ENCODE measurements at regions of chr4 and their contacts with region 1.

Region 1: DNA sequence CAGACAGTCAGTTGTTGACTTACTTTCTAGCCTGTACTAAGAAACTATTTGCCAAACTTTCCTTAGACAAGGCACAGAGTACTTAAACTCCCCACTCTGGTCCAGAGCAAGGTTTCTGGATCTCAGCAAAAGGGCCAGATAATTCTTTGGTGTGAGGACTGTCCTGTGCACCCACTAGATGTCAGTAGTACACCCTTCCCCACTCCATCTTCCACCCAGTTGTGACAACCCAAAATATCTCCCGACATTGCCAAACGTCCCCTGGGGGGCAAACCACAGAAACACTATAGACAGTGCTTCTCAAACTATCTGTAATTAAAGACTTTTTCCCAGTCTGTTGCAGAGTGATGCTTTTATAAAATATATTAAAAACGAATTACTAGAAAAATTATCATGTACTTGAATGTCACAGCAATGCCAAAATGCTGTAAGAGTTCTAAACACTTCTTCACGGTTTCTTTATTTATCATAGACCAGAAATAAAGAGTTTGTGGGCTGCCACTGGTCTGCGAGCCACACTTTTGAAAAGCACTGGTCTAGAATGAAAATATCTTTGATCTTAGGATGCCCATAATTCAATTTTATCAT is 203.5 kb downstream of the PRDM5 start:
- DNase-seq: peak; percentile 49
- ATAC-seq: peak; percentile 93
- H3K4me3 ChIP-seq: no peak overlapping the region
- H3K27ac ChIP-seq: no peak overlapping the region
- H3K4me1 ChIP-seq: 0 out of 2 replicates have a peak, but pooled peaks cover 2% of the 10 kb centered on the region
- H3K27me3 ChIP-seq: no peaks in the 10 kb centered on the region
- CTCF ChIP-seq: peak; percentile 73
- POLR2A ChIP-seq: no peak
- RAD21 ChIP-seq: peak; percentile 87

Region 2: DNA sequence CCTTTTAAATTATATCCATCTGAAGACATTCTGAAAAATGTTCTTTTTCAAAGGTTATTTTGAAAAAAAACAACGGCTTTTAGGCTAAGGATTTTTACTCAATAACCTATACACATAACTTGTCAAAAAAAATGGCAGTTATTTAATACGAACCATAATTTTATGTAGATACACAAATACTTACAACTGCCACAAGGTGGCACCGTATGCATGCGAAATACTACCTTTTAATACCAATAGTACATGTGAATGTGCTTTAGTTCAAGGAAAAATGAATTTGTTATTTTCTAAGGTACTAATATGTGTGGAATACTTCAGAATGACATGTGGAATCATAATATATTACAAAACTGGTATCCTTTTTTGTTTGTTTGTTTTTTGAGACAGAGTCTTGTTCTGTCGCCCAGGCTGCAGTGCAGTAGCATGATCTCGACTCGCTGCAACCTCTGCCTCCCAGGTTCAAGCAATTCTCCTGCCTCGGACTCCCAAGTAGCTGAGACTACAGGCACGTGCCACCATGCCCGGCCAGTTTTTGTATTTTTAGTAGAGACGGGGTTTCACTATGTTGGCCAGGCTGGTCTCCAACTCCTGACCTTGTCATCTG is 647.8 kb before region 1 on chr4:
- CTCF ChIA-PET with region 1: no interaction called
- POLR2A ChIA-PET with region 1: no interaction called
- dilution Hi-C with region 1: no loop called
- in situ Hi-C with region 1: no loop called
- intact Hi-C with region 1: loop called (anchors 5 kb)
- DNase-seq: peak; percentile 80
- ATAC-seq: no peak; the same call in 1 of the 2 replicates
- H3K4me3 ChIP-seq: no peak overlapping the region
- H3K27ac ChIP-seq: no peak overlapping the region
- H3K4me1 ChIP-seq: peaks cover 7% of the 10 kb centered on the region
- H3K27me3 ChIP-seq: no peaks in the 10 kb centered on the region
- CTCF ChIP-seq: peak; percentile 75
- POLR2A ChIP-seq: no peak
- RAD21 ChIP-seq: peak; percentile 75

Region 3: DNA sequence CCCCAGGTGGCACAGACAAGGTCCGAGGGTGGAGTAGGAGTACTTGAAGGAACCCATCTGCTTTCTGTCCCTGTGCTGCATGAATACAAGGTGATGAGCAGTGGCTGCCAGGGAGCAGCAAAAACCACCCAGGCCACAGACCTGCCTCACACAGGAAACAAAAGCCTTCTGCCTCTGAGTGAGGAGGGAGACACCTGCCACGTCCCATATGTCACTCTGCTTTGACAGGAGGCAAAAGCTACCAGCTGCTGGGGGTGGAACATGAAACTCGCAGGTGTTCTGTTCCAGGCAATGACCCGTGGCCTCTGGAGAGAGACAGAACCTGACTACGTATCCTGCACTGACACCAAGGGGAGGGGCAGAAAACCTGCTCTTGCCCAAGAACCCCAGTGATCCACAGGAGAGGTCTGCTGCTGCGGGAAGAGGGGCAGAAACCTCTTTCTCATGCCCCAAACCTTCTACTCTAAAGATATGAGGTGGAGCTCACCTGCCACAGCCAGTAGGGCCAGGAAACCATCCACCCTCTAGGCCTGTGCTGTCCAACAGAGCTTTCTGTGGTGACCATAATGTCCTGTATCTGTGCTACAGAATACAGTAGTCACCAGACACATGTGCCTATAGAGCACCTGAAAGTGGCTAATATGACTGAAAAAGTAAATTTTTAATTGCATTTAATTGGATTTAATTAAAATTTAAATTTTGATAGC is 30.5 kb after region 1 on chr4:
- CTCF ChIA-PET with region 1: no interaction called
- POLR2A ChIA-PET with region 1: no interaction called
- dilution Hi-C with region 1: no loop called
- in situ Hi-C with region 1: no loop called
- intact Hi-C with region 1: no loop called
- DNase-seq: no peak
- ATAC-seq: no peak
- H3K4me3 ChIP-seq: no peak overlapping the region
- H3K27ac ChIP-seq: no peak overlapping the region
- H3K4me1 ChIP-seq: no peaks in the 10 kb centered on the region
- H3K27me3 ChIP-seq: no peaks in the 10 kb centered on the region
- CTCF ChIP-seq: no peak
- POLR2A ChIP-seq: no peak
- RAD21 ChIP-seq: no peak

Region 4: DNA sequence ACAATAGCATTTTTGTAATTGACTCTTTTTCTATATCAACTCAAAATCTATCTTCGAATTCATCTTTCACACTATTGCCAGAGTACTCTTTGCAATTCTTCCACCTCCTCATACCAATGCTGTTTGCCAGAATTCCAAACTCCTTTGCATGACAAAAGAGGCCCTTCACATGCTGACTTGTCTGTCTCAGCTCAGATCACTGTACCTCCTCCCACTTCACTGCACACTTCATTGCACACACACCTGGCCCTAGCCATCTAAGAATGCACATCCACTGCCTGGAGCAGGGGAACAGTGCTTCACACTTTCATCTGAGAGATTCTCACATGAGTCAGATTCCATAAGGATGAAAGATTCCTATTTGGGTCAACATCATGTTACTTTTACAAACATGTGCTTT is 146.9 kb after region 1 on chr4:
- CTCF ChIA-PET with region 1: no interaction called
- POLR2A ChIA-PET with region 1: no interaction called
- dilution Hi-C with region 1: no loop called
- in situ Hi-C with region 1: no loop called
- intact Hi-C with region 1: no loop called
- DNase-seq: peak; percentile 31
- ATAC-seq: no peak; the same call in 1 of the 2 replicates
- H3K4me3 ChIP-seq: no peak overlapping the region
- H3K27ac ChIP-seq: no peak overlapping the region
- H3K4me1 ChIP-seq: peaks cover 4% of the 10 kb centered on the region; the same call in 1 of the 2 replicates
- H3K27me3 ChIP-seq: no peaks in the 10 kb centered on the region
- CTCF ChIP-seq: no peak
- POLR2A ChIP-seq: no peak
- RAD21 ChIP-seq: no peak

Region 5: GRCh38 chr4:120922381-120923206 is 203.5 kb after region 1 on chr4 and contains the start of gene PRDM5:
- CTCF ChIA-PET with region 1: no interaction called
- POLR2A ChIA-PET with region 1: no interaction called
- dilution Hi-C with region 1: no loop called
- in situ Hi-C with region 1: no loop called
- intact Hi-C with region 1: loop called (anchors 2 kb)
- DNase-seq: peak; percentile 40
- ATAC-seq: peak; percentile 75
- H3K4me3 ChIP-seq: peak within 1 kb of the TSS; percentile 49
- H3K27ac ChIP-seq: peak within 1 kb of the TSS; percentile 51
- H3K4me1 ChIP-seq: peaks cover 2% of the 10 kb centered on the region; the same call in 1 of the 2 replicates
- H3K27me3 ChIP-seq: no peaks in the 10 kb centered on the region
- CTCF ChIP-seq: no peak
- POLR2A ChIP-seq: no peak; the same call in 1 of the 2 replicates
- RAD21 ChIP-seq: no peak
- total RNA-seq, gene PRDM5: 10.8 and 12.8 TPM in 2 replicates

Region 6: GRCh38 chr4:120977435-120977997 is 258.4 kb after region 1 on chr4:
- CTCF ChIA-PET with region 1: interaction called, 10 read pairs
- POLR2A ChIA-PET with region 1: no interaction called
- dilution Hi-C with region 1: no loop called
- in situ Hi-C with region 1: no loop called
- intact Hi-C with region 1: loop called (anchors 1 kb)
- DNase-seq: peak; percentile 70
- ATAC-seq: peak; percentile 92
- H3K4me3 ChIP-seq: no peak overlapping the region
- H3K27ac ChIP-seq: no peak overlapping the region
- H3K4me1 ChIP-seq: no peaks in the 10 kb centered on the region
- H3K27me3 ChIP-seq: no peaks in the 10 kb centered on the region; the same call in 1 of the 2 replicates
- CTCF ChIP-seq: peak; percentile 68
- POLR2A ChIP-seq: no peak
- RAD21 ChIP-seq: peak; percentile 72

Region 7: GRCh38 chr4:121050300-121050699 is 331.2 kb after region 1 on chr4:
- CTCF ChIA-PET with region 1: interaction called, 3 read pairs
- POLR2A ChIA-PET with region 1: no interaction called
- dilution Hi-C with region 1: no loop called
- in situ Hi-C with region 1: no loop called
- intact Hi-C with region 1: loop called (anchors 5 kb)
- DNase-seq: no peak
- ATAC-seq: no peak
- H3K4me3 ChIP-seq: no peak overlapping the region
- H3K27ac ChIP-seq: no peak overlapping the region
- H3K4me1 ChIP-seq: no peaks in the 10 kb centered on the region
- H3K27me3 ChIP-seq: no peaks in the 10 kb centered on the region
- CTCF ChIP-seq: peak; percentile 29
- POLR2A ChIP-seq: no peak
- RAD21 ChIP-seq: no peak

Region 8: GRCh38 chr4:121096629-121097028 is 377.6 kb after region 1 on chr4:
- CTCF ChIA-PET with region 1: interaction called, 4 read pairs
- POLR2A ChIA-PET with region 1: no interaction called
- dilution Hi-C with region 1: no loop called
- in situ Hi-C with region 1: loop called (anchors 25 kb)
- intact Hi-C with region 1: loop called (anchors 1 kb)
- DNase-seq: peak; percentile 52
- ATAC-seq: 0 out of 2 replicates have a peak, but pooled peaks have one; percentile 29
- H3K4me3 ChIP-seq: no peak overlapping the region
- H3K27ac ChIP-seq: no peak overlapping the region
- H3K4me1 ChIP-seq: no peaks in the 10 kb centered on the region
- H3K27me3 ChIP-seq: peaks cover 2% of the 10 kb centered on the region; the same call in 1 of the 2 replicates
- CTCF ChIP-seq: peak; percentile 73
- POLR2A ChIP-seq: no peak
- RAD21 ChIP-seq: peak; percentile 72